Esophagus muscularis mucosa (tissue), 4 donors: ENCODE measurements at regions of chr10 and their contacts with region 1.

Region 1: DNA sequence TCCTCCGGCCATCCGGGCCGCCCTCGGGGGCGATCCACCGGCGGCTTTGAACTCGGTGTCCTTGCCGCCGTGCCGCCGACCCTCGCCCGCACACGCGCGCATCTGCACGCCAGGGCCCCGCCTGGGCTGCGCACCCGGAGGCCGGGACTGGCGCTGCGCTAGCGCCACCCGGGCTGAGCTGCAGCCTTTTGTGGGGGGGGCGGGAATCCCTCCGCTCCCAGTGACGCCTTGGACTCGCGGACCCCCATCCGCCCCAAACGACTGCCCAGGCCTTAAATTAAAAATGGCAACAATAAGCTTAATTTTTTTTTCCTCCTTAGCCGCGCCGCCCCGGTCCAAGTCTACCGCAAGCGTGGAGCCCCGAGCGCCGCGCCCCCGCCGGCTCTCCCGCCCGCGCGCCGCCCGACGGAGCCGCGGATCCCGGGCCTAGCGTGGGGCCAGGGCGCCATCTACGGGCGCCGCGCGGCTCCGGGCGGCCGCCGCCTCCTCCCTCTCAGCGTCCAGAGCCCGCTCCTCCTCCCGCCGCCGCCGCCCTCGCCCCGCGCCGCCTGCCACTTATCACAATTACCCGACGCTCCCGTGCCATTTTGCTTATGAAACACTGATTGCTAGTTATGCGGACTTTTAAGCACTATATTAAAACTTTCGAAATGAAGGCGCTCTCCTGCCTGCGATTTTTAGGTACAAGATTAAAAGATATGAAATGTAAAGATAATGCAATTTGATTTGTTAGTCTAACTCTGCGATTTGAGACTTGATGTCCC is 7.5 kb upstream of the EBF3 start:
- DNase-seq: peak; percentile 88
- H3K4me3 ChIP-seq: peak overlapping the region; percentile 47 to 56 (median 48)
- H3K27ac ChIP-seq: no peak overlapping the region
- H3K4me1 ChIP-seq: peaks cover 39 to 67% (median 58%) of the 10 kb centered on the region in 4 donors
- H3K27me3 ChIP-seq: peaks cover 3 to 100% (median 61%) of the 10 kb centered on the region in 4 donors
- CTCF ChIP-seq: peak; percentile 43 to 68 (median 61)
- EP300 ChIP-seq: no peak
- POLR2A ChIP-seq: no peak

Region 2: DNA sequence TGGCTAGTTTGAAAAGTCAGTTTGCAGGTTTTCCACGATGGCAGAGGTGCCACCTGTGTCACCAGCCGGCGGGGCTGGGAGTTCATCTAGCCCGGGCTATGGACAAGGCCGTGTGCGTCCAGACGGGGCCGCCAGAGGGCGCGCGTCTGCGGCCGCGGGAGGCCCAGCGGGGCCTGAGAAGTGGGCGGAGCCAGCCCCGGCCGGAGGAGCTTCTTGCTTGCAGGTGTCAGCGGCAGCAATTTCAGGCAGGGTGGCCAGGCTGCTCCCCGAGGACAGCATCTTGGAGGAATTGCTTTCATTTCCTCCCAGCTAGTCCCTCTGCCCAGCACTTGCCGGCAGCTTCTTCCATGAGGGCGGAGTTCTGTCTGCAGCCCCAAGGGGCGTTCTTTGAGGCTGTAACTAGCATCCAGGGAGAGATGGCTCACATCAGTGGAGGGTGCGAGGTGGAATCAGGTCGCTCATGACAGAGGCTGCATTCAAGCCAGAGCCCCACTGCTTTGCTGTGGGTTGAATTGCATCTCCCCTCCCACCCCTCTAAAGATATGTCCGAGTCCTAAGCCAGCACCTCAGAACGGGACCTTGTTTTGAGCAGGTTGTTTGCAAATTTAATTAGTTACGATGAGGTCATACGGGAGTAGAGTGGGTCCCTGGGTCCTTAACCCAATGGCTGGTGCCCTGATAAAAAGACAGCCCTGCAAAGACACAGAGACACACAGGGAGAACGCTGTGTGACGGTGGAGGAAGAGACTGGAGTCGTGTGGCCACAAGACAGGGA is 1759.4 kb before region 1 on chr10:
- intact Hi-C with region 1: loop called (anchors 5 kb)
- DNase-seq: no peak
- H3K4me3 ChIP-seq: peak overlapping the region in 3 of 4 donors; percentile 21 to 51 (median 37)
- H3K27ac ChIP-seq: no peak overlapping the region
- H3K4me1 ChIP-seq: peaks cover 5 to 23% (median 18%) of the 10 kb centered on the region in 4 donors
- H3K27me3 ChIP-seq: peaks cover 0 to under 1% (median 0%) of the 10 kb centered on the region in 4 donors
- CTCF ChIP-seq: peak in 2 of 3 experiments; percentile 80 to 81
- EP300 ChIP-seq: no peak
- POLR2A ChIP-seq: no peak

Region 3: GRCh38 chr10:129030996-129031843 is 940.3 kb before region 1 on chr10:
- intact Hi-C with region 1: loop called (anchors 2 kb)
- DNase-seq: no peak
- H3K4me3 ChIP-seq: no peak overlapping the region
- H3K27ac ChIP-seq: no peak overlapping the region
- H3K4me1 ChIP-seq: peaks cover 0 to 6% (median 5%) of the 10 kb centered on the region in 4 donors
- H3K27me3 ChIP-seq: peaks cover 0 to 80% (median 7%) of the 10 kb centered on the region in 4 donors
- CTCF ChIP-seq: peak; percentile 81 to 90 (median 89)
- EP300 ChIP-seq: no peak
- POLR2A ChIP-seq: no peak

Region 4: DNA sequence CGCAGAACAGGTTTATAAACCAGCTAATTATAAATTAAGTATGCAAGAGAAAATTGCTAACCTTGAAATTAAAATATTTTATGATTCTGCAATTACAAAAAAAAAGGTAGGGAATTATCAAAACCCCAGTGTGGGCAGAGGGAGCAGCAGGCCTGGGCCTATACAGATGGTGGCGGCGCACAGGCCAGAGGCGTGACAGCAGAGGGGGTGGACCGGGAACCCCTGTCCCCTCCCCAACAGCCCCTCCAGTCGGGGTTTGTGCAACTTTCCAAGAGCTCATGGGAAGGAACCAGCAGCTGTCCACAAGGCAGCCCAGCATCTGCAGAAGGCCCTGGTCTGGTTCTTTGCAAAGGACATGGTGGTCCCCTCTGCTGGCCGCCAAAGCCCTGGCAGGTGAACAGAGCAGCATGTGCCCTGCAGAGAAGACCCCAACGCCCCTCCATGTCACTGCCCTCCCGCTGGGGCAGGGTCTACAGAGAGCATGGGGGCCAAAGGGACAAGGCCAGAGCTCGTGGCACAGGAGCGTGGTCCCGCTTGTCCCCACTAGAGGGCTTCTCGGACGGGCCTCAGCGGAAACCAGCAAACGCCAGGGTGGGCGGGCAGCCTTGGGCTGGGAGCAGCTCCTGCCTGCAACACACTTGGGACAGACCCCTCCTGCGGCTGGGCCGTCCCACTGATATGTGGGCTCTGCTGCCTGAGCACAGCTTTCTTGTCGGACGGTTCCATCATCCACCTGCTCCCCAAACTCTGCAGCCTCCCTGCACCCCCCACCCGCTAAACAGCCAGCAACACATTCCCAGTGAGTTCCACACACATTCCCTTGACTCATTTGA is 82.6 kb before region 1 on chr10:
- intact Hi-C with region 1: loop called (anchors 5 kb)
- DNase-seq: no peak
- H3K4me3 ChIP-seq: no peak overlapping the region
- H3K27ac ChIP-seq: no peak overlapping the region
- H3K4me1 ChIP-seq: peaks cover 0 to 16% (median 3%) of the 10 kb centered on the region in 4 donors
- H3K27me3 ChIP-seq: peaks cover 0 to 14% (median 0%) of the 10 kb centered on the region in 4 donors
- CTCF ChIP-seq: peak; percentile 28 to 60 (median 40)
- EP300 ChIP-seq: no peak
- POLR2A ChIP-seq: no peak

Region 5: GRCh38 chr10:130400890-130401289 is 429.3 kb after region 1 on chr10:
- intact Hi-C with region 1: no loop called
- DNase-seq: no peak
- H3K4me3 ChIP-seq: no peak overlapping the region
- H3K27ac ChIP-seq: no peak overlapping the region
- H3K4me1 ChIP-seq: no peaks in the 10 kb centered on the region
- H3K27me3 ChIP-seq: no peaks in the 10 kb centered on the region
- CTCF ChIP-seq: no peak
- EP300 ChIP-seq: no peak
- POLR2A ChIP-seq: no peak